Mammary epithelial cell (primary cell): ENCODE measurements at regions of chr1 and their contacts with region 1.

Region 1: DNA sequence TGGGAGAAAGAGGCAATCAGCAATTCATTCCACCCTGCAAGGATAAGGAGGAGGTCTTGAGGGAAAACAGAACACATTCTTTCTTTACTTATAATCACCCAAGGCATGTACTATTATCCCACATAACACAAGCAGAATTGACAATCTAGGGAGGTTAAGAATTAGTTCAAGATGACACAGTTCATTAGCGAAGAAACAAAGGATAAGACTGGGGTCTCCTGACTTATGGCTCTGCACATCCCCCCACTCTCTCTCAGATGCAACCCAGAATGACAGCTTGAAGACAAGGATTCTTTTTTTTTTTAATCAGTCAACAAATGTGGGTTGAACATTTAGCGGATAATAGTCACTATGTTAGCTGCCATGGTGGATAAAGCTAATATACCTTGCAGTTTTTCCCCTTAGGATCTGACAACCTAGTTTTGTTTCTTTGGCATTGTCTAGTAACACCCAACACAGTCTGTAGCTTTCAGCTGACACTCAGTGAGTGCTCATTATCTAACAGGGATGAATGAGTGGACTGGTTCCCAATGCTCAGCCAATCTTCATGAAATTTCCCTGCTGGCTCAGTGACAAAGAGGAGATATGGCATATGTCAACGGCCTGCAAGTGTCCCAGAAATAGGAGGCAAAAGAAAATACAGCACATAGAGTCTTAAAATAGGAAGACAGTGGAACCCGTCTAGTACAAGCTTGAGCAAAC is 35.1 kb downstream of the RXRG start:
- DNase-seq: no peak
- H3K4me3 ChIP-seq: no peak overlapping the region
- H3K27ac ChIP-seq: no peak overlapping the region
- H3K4me1 ChIP-seq: no peaks in the 10 kb centered on the region
- H3K27me3 ChIP-seq: peaks cover 6% of the 10 kb centered on the region
- CTCF ChIP-seq: no peak

Region 2: GRCh38 chr1:165512812-165513211 is 103.0 kb after region 1 on chr1:
- CTCF ChIA-PET with region 1: no interaction called
- dilution Hi-C with region 1: loop called (anchors 5 kb)
- in situ Hi-C with region 1: no loop called
- intact Hi-C with region 1: no loop called
- DNase-seq: no peak
- H3K4me3 ChIP-seq: no peak overlapping the region
- H3K27ac ChIP-seq: no peak overlapping the region
- H3K4me1 ChIP-seq: no peaks in the 10 kb centered on the region
- H3K27me3 ChIP-seq: peaks cover 2% of the 10 kb centered on the region
- CTCF ChIP-seq: no peak